Kidney (tissue), 22 donors: ENCODE measurements at regions of chr5 and their contacts with region 1.

Region 1: DNA sequence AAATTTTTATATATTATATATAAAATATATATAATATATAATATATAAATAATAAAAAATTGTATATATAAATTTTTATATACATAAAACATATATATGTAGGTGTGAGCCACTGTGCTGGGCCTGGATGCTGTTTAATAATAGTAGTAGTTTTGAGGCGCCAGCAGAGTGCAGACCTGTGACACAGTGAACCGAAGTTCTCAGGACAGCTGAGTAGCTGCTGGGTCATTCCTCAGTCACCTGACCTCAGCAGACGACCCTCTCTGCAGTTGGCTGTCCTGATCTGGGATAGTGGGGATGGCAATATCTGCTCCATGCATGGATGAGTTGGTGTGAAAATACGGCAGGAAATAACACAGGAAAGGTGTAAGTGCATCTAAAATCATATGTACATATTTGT is 3.3 kb upstream of the SNX18 start:
- DNase-seq: peak in 4 of 5 donors; percentile 53 to 65 (median 59)
- H3K4me3 ChIP-seq: no peak overlapping the region
- H3K27ac ChIP-seq: no peak overlapping the region
- H3K4me1 ChIP-seq: peaks cover 0 to 13% (median 6%) of the 10 kb centered on the region in 3 donors
- H3K27me3 ChIP-seq: no peaks in the 10 kb centered on the region
- CTCF ChIP-seq: no peak

Region 2: DNA sequence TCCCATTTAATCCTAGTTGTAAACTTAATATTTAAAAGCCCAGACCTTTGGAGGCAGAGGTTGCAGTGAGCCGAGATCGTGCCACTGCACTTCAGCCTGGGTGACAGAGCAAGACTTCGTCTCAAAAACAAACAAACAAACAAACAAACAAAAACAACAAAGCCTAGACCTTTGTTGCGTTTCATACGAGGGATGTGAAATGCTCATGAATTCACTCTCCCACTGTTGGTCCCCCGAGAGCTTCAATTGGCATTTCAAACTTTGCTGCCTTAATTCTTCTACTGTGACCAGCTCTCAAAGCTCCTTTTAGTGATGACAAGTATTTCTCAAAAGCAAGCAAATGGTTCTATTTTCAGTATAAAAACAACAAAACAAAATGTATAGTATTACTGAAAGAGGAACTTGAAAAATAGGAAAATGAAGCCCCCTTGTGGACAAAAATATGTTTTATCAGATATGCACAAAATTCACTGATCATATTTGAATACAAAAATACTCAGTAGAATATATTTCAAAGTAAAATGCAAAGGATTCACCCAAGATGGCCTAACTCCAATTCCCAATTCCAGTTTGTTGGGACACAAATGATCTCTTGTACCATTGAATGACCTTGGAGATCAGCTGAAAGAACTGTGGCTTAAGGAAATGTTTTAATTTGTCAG is 330.7 kb after region 1 on chr5:
- intact Hi-C with region 1: loop called (anchors 5 kb)
- DNase-seq: peak in 2 of 5 donors; percentile 67 to 80
- H3K4me3 ChIP-seq: peak overlapping the region in 2 of 3 donors; percentile 45 to 55
- H3K27ac ChIP-seq: peak overlapping the region in 1 of 2 donors; percentile 7
- H3K4me1 ChIP-seq: no peaks in the 10 kb centered on the region
- H3K27me3 ChIP-seq: no peaks in the 10 kb centered on the region
- CTCF ChIP-seq: peak; percentile 44